ENCODE measurements at regions of chr17 and their contacts with region 1.

Region 1: GRCh38 chr17:42530952-42531454 is 5.0 kb upstream of the NAGLU start:
- DNase-seq: peak in 1 of 10 donors; percentile 42
- ATAC-seq: no peak
- H3K4me3 Mint-ChIP-seq: peak overlapping the region; percentile 76 to 90 (median 87)
- H3K27ac Mint-ChIP-seq: peak overlapping the region in 9 of 10 donors; percentile 84 to 95 (median 90)
- H3K4me1 Mint-ChIP-seq: peaks cover 14 to 65% (median 48%) of the 10 kb centered on the region in 4 donors
- H3K27me3 Mint-ChIP-seq: no peaks in the 10 kb centered on the region

Region 2: GRCh38 chr17:42548070-42548837 is 17.3 kb after region 1 on chr17:
- POLR2A ChIA-PET with region 1: interaction called, 16 read pairs
- DNase-seq: peak; percentile 42 to 87 (median 74)
- ATAC-seq: peak; percentile 90 to 97
- H3K4me3 Mint-ChIP-seq: peak overlapping the region; percentile 33 to 72 (median 50)
- H3K27ac Mint-ChIP-seq: peak overlapping the region in 3 of 10 donors; percentile 6 to 34 (median 7)
- H3K4me1 Mint-ChIP-seq: peaks cover 9 to 32% (median 21%) of the 10 kb centered on the region in 4 donors
- H3K27me3 Mint-ChIP-seq: no peaks in the 10 kb centered on the region

Region 3: DNA sequence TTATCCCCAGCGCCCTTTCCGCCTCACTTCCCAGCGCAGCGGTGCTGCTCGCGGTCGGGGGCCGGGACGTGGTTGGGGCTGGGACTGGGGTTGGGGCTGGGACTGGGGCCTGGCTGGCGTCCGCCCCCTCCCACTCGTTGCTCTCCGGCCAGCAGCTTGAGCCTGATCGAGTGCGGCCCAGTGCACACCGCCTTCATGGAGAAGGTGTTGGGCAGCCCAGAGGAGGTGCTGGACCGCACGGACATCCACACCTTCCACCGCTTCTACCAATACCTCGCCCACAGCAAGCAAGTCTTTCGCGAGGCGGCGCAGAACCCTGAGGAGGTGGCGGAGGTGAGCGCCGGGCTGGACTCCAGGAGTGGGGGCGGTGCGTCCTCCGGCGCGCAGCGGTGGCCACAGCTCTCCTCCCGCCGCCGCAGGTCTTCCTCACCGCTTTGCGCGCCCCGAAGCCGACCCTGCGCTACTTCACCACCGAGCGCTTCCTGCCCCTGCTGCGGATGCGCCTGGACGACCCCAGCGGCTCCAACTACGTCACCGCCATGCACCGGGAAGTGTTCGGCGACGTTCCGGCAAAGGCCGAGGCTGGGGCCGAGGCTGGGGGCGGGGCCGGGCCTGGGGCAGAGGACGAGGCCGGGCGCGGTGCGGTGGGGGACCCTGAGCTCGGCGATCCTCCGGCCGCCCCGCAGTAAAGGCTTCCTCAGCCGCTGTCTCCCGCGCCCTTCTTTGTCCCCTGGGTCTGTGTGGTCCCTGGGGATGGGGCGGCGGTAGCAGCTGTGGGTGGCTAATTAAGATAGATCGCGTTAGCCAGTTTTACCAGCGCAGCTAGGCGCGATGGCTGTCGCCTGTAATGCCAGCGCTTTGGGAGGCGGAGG is 23.5 kb after region 1 on chr17:
- POLR2A ChIA-PET with region 1: interaction called, 12 read pairs
- DNase-seq: peak; percentile 61 to 88 (median 74)
- ATAC-seq: peak; percentile 91 to 93
- H3K4me3 Mint-ChIP-seq: peak overlapping the region; percentile 84 to 95 (median 92)
- H3K27ac Mint-ChIP-seq: peak overlapping the region; percentile 83 to 96 (median 94)
- H3K4me1 Mint-ChIP-seq: peaks cover 11 to 51% (median 33%) of the 10 kb centered on the region in 4 donors
- H3K27me3 Mint-ChIP-seq: no peaks in the 10 kb centered on the region